Cardiac septum (tissue), 1 donor: ENCODE measurements at regions of chr13 and their contacts with region 1.

Region 1: DNA sequence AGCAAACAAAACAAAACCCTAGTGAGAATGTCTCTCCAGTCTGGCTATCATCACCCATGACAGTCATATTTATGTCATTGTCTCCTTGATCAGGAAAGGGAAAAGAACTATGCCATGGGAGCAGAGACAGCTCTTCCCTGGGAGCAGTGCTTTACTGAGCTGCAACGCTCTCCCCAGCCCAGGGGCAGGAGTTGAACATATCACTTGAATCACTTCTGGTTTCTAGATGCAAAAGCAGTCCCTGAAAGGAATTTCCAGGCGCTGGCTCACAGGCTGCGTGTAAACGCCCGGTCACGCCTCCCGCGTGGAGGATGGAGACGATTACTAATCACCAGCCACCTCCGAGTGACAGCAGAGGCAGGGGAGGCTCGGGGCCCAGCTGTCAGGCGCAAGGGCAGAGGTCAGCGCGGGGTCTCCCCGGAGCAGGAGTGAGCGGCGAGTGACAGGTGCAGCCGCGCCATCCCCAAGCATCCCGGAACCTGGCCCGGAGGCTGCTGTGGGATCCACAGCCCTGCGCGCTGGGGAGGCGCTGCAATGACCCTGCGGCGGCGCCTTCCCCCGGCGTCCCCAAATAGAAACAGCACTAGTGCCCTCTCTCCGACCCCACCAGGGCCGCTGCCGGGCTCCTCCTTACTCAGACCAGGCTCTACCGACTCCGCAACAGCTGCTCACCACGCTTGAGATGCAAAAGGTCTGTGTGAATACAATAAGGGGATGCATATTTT is 23.5 kb upstream of the DCLK1 start:
- DNase-seq: no peak

Region 2: DNA sequence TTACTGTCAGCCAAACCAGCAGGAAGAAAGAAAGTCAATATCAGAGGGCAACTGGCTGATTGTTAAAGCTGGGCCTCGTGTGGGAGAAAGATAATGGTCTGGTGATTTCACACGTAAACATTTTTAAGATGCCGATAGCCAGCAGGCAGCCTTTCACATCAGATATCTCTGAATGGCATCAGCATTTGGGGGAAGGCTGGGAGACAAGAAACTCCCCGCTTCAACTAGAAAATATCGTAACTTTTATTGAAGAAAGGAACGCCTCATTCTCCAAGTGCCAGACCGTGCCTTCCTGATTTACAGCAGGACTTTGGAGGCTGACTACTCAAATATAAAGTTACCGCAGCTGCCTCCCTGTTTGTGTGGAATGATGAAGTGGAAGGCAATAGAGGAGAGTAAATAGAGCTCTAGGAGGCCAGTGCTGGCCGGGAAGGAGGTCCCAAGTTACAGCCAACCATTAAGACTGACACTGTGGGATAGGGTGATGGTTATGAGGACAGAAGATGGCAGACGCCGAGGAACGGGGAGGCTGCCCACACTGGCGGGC is 393.9 kb before region 1 on chr13:
- intact Hi-C with region 1: no loop called
- DNase-seq: no peak

Region 3: GRCh38 chr13:35927567-35928021 is 227.1 kb before region 1 on chr13:
- intact Hi-C with region 1: no loop called
- DNase-seq: no peak

Region 4: GRCh38 chr13:36261976-36262375 is 107.2 kb after region 1 on chr13:
- intact Hi-C with region 1: loop called (anchors 10 kb)
- DNase-seq: no peak